PC-9 (cell line): ENCODE measurements at regions of chr2 and their contacts with region 1.

Region 1: DNA sequence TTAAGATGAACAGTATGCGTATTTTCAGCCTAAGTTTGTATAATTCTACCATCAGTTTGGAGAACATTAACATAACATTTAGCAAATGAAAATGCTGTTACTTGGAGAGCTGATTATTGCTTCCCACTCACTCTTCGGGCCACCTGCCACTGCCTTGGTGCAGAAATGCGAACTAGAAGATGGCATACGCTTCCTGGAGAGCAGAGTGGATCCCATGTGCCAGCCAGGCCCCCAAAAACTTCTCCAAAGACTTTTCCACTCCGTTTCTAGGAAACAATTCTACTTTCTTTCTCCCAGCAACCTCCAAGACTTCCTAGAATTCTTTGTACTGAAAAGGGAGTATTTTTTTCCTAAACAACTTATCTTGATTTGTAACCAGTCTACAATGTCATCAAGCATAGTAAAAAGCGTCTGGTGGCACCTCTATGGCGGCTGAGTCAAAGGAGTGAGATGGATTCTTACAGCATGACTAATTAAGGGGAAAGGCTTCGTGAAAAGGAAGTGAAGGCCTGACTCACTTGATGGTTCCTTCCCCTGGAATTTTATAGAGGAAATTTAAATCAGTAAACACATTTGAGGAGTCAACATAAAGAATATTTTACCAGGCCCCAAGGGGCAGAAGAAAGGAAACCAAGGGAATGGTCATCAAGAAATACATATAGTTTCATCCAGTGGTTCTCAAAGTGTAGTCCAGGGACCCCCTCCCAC is 36.6 kb downstream of the FEZ2 start:
- DNase-seq: peak; percentile 69 to 99
- H3K4me3 ChIP-seq: peak overlapping the region; percentile 30; the same call in 1 of the 2 replicates
- H3K27ac ChIP-seq: peak overlapping the region; percentile 99
- H3K4me1 ChIP-seq: peaks cover 49% of the 10 kb centered on the region
- H3K27me3 ChIP-seq: no peaks in the 10 kb centered on the region
- CTCF ChIP-seq: no peak

Region 2: GRCh38 chr2:36329746-36330472 is 231.5 kb before region 1 on chr2:
- CTCF ChIA-PET with region 1: no interaction called
- POLR2A ChIA-PET with region 1: no interaction called
- intact Hi-C with region 1: loop called (anchors 5 kb)
- DNase-seq: peak in 1 of 2 experiments; percentile 94
- H3K4me3 ChIP-seq: no peak overlapping the region
- H3K27ac ChIP-seq: peak overlapping the region; percentile 61
- H3K4me1 ChIP-seq: peaks cover 38% of the 10 kb centered on the region
- H3K27me3 ChIP-seq: no peaks in the 10 kb centered on the region
- CTCF ChIP-seq: no peak

Region 3: DNA sequence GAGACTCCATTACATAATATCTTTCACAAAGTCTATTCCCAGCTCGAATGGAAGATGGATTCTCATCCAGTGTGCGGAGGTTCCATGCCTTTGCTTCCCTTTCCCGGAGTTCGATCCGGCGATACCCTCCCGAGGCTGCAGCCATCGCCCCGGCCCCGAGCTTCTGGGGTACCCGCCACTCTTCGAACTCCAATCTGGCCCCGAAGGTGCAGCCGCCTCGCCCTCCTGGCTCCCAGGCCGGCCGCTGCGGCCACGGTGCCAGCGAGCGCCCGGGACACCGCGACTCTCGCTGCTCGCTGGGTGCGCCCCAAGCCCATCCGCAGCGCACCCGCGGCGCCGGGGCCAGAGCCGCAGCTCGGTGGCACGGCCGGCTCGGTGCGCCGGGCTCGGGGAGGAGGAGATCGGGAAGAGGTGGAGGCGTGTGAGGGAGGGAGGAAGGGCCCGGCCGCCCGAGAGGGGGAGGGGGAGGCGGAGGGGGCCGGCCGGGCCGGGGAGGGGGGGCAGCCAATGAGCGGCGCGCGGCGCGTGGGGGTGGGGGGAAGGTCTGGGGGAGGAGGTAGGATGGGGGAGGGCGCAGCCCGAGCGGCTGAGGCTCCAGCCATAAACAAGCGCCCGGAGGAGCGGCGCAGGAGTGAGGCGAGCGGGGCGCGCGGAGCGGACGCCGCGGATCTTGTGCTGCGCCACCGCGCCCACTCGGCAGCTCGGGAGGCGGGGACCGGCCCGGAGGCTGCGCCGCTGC is 206.1 kb before region 1 on chr2 and contains the start of gene CRIM1:
- CTCF ChIA-PET with region 1: no interaction called
- POLR2A ChIA-PET with region 1: no interaction called
- intact Hi-C with region 1: loop called (anchors 5 kb)
- DNase-seq: peak; percentile 70 to 82
- H3K4me3 ChIP-seq: peak within 1 kb of the TSS; percentile 67
- H3K27ac ChIP-seq: peak within 1 kb of the TSS; percentile 60
- H3K4me1 ChIP-seq: peaks cover 55% of the 10 kb centered on the region
- H3K27me3 ChIP-seq: no peaks in the 10 kb centered on the region
- CTCF ChIP-seq: no peak
- total RNA-seq, gene CRIM1: 133 and 154 TPM in 2 replicates

Region 4: DNA sequence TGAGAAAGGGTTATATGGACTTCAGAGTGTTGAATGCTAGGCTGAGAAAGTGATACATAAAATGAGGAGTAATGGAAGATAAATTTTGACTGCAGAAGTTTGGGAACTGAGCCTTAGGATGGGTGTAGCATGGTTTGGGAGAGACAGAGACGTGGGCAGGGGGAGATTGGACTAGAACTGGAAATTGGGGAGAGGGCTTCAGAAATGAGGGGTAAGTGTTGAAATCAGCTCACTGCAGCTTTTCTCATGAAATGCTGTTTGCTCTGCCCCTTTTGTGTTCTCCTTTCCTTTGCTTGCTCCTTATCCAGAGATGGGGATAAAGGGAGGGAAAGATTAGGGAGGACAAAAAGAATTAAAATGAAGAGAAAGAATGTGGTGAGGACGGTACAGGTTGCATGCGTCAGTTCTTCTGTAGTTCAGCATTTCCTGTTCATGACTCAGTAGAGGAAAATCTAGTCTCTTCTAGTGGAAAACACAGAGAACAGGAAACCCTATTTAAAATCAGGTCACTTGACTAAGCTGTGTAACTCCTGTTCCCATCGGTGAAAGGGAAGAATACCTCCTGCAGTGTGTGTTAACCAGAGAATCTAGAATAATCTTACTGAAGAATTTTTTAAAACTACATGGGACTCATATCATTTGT is 100.2 kb before region 1 on chr2:
- CTCF ChIA-PET with region 1: no interaction called
- POLR2A ChIA-PET with region 1: no interaction called
- intact Hi-C with region 1: loop called (anchors 1 kb)
- DNase-seq: peak in 1 of 2 experiments; percentile 94
- H3K4me3 ChIP-seq: peak overlapping the region; percentile 5; the same call in 1 of the 2 replicates
- H3K27ac ChIP-seq: peak overlapping the region; percentile 79
- H3K4me1 ChIP-seq: peaks cover 37% of the 10 kb centered on the region
- H3K27me3 ChIP-seq: no peaks in the 10 kb centered on the region
- CTCF ChIP-seq: no peak

Region 5: DNA sequence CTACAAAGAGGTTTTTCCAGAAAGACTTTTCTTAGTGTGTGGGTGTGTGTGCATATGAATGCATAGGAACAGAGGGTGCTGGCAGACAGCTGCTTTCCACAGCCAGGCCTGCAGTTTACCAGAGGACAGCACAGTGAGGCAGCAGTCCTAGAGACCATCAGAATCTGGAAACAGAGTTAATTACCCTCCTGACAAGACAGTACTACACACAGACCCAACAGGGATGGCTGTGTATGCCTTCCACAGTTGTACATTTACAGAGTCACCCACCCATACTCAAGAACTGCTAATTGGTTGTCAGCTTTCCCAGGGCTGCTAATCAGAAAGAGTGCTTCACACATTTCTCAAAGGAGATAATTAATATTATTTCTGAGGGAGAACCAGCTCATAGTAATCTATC is 68.1 kb before region 1 on chr2:
- CTCF ChIA-PET with region 1: no interaction called
- POLR2A ChIA-PET with region 1: no interaction called
- intact Hi-C with region 1: no loop called
- DNase-seq: no peak
- H3K4me3 ChIP-seq: no peak overlapping the region
- H3K27ac ChIP-seq: no peak overlapping the region
- H3K4me1 ChIP-seq: peaks cover 9% of the 10 kb centered on the region
- H3K27me3 ChIP-seq: no peaks in the 10 kb centered on the region
- CTCF ChIP-seq: no peak

Region 6: GRCh38 chr2:36545871-36546416 is 15.4 kb before region 1 on chr2:
- CTCF ChIA-PET with region 1: no interaction called
- POLR2A ChIA-PET with region 1: interaction called, 20 read pairs
- intact Hi-C with region 1: no loop called
- DNase-seq: no peak
- H3K4me3 ChIP-seq: no peak overlapping the region
- H3K27ac ChIP-seq: no peak overlapping the region
- H3K4me1 ChIP-seq: no peaks in the 10 kb centered on the region
- H3K27me3 ChIP-seq: no peaks in the 10 kb centered on the region
- CTCF ChIP-seq: peak; percentile 44; the same call in 1 of the 2 replicates

Region 7: DNA sequence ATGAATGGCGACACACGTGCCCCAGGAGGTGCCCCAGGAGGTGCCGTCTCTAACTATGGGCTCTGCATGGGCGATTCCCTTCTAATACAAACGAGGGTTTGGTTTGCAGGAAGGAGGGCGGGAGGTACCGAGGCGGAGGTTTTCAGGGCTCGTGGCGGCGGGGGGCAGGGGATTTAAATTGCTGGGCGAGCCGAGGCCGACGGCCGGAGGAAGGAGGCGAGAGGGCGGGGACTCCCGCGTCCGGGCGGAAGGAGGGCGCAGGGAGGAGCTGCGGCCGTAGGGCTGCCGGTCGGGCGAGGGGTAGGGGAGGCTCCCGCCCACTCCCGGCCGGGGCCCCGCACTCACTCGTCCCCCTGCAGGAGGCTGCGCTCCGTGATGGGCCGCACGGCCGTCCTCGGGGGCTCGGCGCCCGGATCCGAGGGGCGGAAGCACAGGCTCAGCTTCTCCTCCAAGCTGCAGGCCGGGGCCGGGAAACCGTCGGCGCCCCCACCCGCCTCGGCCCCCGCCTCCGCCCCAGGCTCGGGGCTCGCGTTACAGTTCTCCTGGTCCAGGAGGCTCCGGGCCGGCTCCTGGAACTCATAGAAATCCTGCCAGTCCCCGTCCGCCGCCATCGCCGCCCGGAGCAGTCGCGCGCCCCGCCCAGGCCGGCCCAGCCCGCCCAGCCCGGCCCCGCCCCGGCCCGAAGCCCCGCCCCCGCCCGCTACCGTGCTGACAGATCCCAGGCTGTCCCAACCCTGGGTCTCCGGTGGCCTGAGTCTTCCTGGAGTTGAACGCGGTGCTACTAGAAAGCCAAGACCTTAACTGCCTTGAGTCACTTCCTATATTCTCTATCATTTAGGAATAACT is 36.4 kb after region 1 on chr2 and contains the start of gene FEZ2:
- CTCF ChIA-PET with region 1: no interaction called
- POLR2A ChIA-PET with region 1: no interaction called
- intact Hi-C with region 1: loop called (anchors 5 kb)
- DNase-seq: peak; percentile 72 to 79
- H3K4me3 ChIP-seq: peak within 1 kb of the TSS; percentile 65
- H3K27ac ChIP-seq: peak within 1 kb of the TSS; percentile 53; the same call in 1 of the 2 replicates
- H3K4me1 ChIP-seq: peaks cover 22% of the 10 kb centered on the region
- H3K27me3 ChIP-seq: no peaks in the 10 kb centered on the region
- CTCF ChIP-seq: no peak
- total RNA-seq, gene FEZ2: 33.9 and 36.1 TPM in 2 replicates

Region 8: GRCh38 chr2:36770542-36771287 is 209.3 kb after region 1 on chr2:
- CTCF ChIA-PET with region 1: no interaction called
- POLR2A ChIA-PET with region 1: interaction called, 11 read pairs
- intact Hi-C with region 1: no loop called
- DNase-seq: peak in 1 of 2 experiments; percentile 32
- H3K4me3 ChIP-seq: no peak overlapping the region
- H3K27ac ChIP-seq: no peak overlapping the region
- H3K4me1 ChIP-seq: no peaks in the 10 kb centered on the region
- H3K27me3 ChIP-seq: no peaks in the 10 kb centered on the region
- CTCF ChIP-seq: peak; percentile 68

Region 9: GRCh38 chr2:36785179-36785795 is 223.9 kb after region 1 on chr2:
- CTCF ChIA-PET with region 1: no interaction called
- POLR2A ChIA-PET with region 1: no interaction called
- intact Hi-C with region 1: no loop called
- DNase-seq: peak; percentile 66 to 80
- H3K4me3 ChIP-seq: no peak overlapping the region
- H3K27ac ChIP-seq: no peak overlapping the region
- H3K4me1 ChIP-seq: no peaks in the 10 kb centered on the region
- H3K27me3 ChIP-seq: peaks cover 10% of the 10 kb centered on the region; the same call in 1 of the 2 replicates
- CTCF ChIP-seq: peak; percentile 99